HCT116 (cell line): ENCODE measurements at regions of chr12 and their contacts with region 1.

Region 1: DNA sequence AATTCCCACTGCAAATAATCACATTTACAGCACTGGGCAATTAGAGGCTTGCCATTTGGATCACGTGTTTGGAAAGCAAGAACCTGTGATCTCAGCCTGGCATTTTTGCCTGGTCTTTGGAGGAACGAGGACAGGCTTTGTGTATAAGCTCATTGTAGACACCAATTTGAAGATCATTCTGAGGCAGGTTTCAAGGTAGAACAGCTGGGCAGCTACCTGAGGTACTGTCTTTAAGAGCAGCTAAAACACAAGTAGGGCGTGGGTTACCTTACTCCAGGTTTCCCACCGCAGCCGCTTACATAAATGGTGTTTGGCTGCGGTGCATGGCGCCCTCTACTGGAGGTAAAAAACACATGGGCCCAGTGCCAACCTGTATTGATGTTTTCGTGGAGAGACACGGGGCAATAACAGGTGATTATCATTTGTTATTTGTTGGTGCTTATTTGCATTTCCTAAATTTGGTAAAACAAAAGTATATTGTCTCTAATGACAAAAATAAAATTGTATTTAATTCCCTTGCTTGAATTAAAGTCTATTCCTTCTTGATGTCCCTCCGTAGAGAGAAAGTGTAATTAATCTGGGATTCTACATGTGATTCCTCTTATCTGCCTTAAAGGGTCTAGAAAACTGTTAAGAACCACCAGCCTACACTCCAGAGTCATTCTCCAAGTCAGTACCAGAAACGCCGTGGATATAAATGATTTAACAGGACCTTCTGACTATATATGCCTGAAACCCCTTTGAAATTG is 69.7 kb downstream of the SVOP start:
- DNase-seq: peak; percentile 70
- ATAC-seq: peak; percentile 85
- H3K4me3 ChIP-seq: peak overlapping the region; percentile 2 to 27; a peak in 2 of 4 replicates
- H3K27ac ChIP-seq: no peak overlapping the region
- H3K4me1 ChIP-seq: peaks cover 0 to 9% of the 10 kb centered on the region in 2 experiments; a peak in 2 of 4 replicates
- H3K27me3 ChIP-seq: no peaks in the 10 kb centered on the region
- CTCF ChIP-seq: peak; percentile 77 to 95 (median 86)
- POLR2A ChIP-seq: no peak
- RAD21 ChIP-seq: peak; percentile 96

Region 2: DNA sequence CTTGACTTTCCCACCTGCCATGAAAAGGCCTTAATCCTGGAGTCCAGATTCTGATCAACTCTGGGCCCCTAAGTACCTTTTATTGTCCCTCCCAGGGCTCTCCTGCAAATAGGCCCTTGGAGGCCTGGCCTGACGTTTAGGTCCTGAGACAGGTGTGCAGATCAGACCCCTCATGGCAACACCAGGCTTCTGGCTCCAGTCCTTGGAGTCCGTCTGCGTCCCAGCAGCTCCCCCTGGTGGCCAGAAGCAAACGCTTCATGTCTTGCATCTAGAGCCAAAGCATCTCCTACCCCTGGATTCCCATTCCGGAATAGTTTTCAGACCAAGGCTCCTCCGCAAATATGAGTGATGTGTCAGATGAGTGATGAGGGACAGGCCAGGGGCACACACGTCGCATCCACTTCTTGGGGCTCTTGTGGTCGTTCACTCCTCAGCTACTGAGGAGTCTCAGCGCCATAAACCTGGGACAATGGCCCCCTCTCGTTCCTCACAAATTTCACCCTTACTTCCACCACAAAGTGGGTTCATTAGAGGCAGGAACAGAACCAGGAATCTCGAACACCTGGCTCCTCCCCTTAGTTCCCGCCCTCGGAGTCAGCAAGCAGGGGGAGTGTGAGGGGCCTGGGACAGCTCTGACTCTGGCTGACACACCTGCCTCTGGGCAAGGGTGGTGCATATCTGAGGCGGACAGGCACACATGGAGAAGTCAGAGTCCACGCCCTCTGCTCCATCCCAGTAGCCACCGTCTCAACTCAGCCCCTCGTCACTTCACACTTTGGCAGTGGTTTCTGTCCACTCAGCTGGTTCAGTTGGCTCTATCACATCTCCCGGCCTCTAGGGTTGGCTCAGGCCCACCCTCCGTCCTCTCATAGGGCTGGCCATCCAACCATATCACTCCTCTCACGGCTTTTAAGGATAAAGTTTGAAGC is 1343.4 kb before region 1 on chr12:
- CTCF ChIA-PET with region 1: no interaction called
- POLR2A ChIA-PET with region 1: no interaction called
- RAD21 ChIA-PET with region 1: no interaction called
- intact Hi-C with region 1: no loop called
- DNase-seq: peak; percentile 57
- ATAC-seq: peak; percentile 93
- H3K4me3 ChIP-seq: no peak overlapping the region
- H3K27ac ChIP-seq: no peak overlapping the region
- H3K4me1 ChIP-seq: no peaks in the 10 kb centered on the region
- H3K27me3 ChIP-seq: no peaks in the 10 kb centered on the region
- CTCF ChIP-seq: peak; percentile 90 to 93 (median 91)
- POLR2A ChIP-seq: no peak
- RAD21 ChIP-seq: peak; percentile 93

Region 3: DNA sequence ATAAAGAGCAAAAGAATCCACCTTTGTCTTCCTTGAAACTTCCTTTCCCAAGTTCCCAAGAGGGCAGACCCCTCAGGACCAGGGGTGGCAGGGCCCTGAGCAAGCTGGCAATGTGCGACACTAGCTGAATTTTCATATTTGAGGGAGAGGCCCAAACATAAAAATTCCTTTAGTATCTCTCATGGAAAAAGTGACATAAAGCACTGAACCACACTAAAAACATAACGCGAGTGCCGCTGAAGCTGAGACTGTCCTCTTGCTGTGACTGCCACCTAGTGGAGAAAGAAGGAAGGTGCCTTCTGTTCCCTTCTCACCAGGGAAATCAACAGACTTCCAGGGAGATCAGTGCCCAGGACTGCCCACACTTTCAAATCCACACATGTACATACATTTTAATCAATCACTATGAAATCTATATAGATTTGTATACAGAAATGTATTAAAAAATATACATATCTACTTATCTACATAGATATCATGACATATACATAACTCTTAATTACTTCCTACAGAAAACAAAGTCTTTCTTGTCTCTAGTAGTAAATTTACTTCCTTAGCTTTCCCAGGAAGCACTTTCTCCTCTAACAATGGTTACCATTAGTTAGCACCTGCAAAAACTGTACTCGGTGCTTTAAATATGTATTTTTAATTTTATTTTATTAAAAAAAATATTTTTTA is 147.6 kb before region 1 on chr12:
- CTCF ChIA-PET with region 1: interaction called, 9 read pairs
- POLR2A ChIA-PET with region 1: no interaction called
- RAD21 ChIA-PET with region 1: no interaction called
- intact Hi-C with region 1: loop called (anchors 5 kb)
- DNase-seq: peak; percentile 69
- ATAC-seq: peak; percentile 88
- H3K4me3 ChIP-seq: no peak overlapping the region
- H3K27ac ChIP-seq: peak overlapping the region; percentile 12; the same call in 1 of the 2 replicates
- H3K4me1 ChIP-seq: peaks cover 6 to 11% of the 10 kb centered on the region in 2 experiments; a peak in 3 of 4 replicates
- H3K27me3 ChIP-seq: no peaks in the 10 kb centered on the region
- CTCF ChIP-seq: peak; percentile 88 to 91 (median 88)
- POLR2A ChIP-seq: no peak
- RAD21 ChIP-seq: peak; percentile 95

Region 4: DNA sequence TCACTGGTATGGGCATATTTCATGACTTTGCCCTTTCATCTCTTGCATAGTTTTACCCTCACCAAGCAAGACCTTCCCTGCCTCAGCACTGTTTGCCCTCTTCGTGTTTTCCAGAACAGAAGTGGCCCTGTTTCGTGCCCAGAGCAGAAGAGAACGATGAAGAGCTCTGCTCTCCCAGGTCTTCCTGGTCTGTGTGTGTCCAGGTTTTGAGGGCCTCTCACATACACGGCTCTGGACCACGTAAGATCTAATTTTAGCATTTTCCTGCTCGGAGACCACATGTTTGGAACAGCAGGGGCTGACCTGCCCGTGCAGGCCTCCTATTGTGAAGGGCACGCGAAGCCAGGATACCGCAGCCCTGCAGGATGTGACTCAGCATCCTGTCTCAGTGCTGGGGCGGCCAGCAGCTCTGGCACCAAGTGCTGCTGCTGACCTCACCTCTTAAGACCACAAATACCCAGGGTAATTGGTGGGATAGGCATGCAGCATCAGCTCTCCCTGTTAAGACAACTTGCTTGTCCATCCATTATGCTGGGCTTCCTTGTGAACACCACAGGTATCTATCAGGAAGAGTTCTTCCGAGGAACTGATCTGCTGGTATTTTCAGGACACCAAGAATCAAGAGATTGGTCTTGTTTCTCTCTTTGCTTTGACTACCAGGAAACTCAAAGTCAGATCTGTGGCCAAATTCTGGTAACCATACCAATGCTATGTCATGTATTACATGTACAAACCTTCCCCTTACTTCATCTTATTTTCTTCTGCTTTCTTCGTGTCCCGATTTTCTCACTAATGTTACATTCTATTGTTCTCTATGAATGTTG is 112.8 kb before region 1 on chr12:
- CTCF ChIA-PET with region 1: interaction called, 3 read pairs
- POLR2A ChIA-PET with region 1: no interaction called
- RAD21 ChIA-PET with region 1: no interaction called
- intact Hi-C with region 1: loop called (anchors 1 kb)
- DNase-seq: peak; percentile 97
- ATAC-seq: peak; percentile 85
- H3K4me3 ChIP-seq: peak overlapping the region in 1 of 2 experiments; percentile 11; a peak in 2 of 4 replicates
- H3K27ac ChIP-seq: peak overlapping the region; percentile 99
- H3K4me1 ChIP-seq: peaks cover 78 to 95% of the 10 kb centered on the region in 2 experiments
- H3K27me3 ChIP-seq: no peaks in the 10 kb centered on the region
- CTCF ChIP-seq: no peak
- POLR2A ChIP-seq: no peak
- RAD21 ChIP-seq: no peak

Region 5: GRCh38 chr12:108884116-108885012 is 66.8 kb before region 1 on chr12:
- CTCF ChIA-PET with region 1: interaction called, 9 read pairs
- POLR2A ChIA-PET with region 1: no interaction called
- RAD21 ChIA-PET with region 1: interaction called in 1 of 2 experiments, 3 read pairs
- intact Hi-C with region 1: loop called (anchors 2 kb)
- DNase-seq: peak; percentile 39
- ATAC-seq: peak; percentile 87
- H3K4me3 ChIP-seq: no peak overlapping the region
- H3K27ac ChIP-seq: no peak overlapping the region
- H3K4me1 ChIP-seq: peaks cover 0 to 6% of the 10 kb centered on the region in 2 experiments; a peak in 1 of 4 replicates
- H3K27me3 ChIP-seq: no peaks in the 10 kb centered on the region
- CTCF ChIP-seq: peak; percentile 43 to 83 (median 81); a peak in 5 of 6 replicates
- POLR2A ChIP-seq: no peak
- RAD21 ChIP-seq: peak; percentile 49

Region 6: DNA sequence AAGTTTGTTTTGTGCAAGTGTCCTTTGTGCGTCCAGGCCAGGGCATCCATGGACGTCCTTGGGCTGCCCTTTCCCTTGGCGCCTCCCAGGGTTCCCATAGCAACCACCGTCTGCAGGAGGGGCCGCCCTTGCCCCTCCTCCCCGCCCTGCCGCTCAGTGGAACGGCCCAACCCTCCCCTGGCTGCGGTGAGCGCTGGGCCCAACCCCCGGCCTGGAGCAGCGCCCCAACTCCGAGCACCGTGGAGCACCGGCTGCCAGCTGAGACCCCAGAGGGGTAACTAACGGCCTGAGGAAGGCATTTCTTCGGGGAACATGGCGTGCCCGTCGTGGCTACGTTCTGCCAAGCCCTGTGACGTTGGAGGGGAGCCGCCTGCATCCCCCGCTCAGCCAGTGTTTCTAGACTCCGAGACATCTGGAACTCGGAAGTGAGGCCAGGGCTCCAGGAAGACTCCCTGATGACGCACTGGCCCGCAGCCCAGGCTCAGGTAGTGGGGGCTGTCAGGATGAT is 159.9 kb after region 1 on chr12:
- CTCF ChIA-PET with region 1: no interaction called
- POLR2A ChIA-PET with region 1: no interaction called
- RAD21 ChIA-PET with region 1: no interaction called
- intact Hi-C with region 1: no loop called
- DNase-seq: no peak
- ATAC-seq: peak; percentile 15; the same call in 1 of the 2 replicates
- H3K4me3 ChIP-seq: no peak overlapping the region
- H3K27ac ChIP-seq: no peak overlapping the region
- H3K4me1 ChIP-seq: no peaks in the 10 kb centered on the region
- H3K27me3 ChIP-seq: no peaks in the 10 kb centered on the region
- CTCF ChIP-seq: no peak
- POLR2A ChIP-seq: no peak
- RAD21 ChIP-seq: no peak

Region 7: DNA sequence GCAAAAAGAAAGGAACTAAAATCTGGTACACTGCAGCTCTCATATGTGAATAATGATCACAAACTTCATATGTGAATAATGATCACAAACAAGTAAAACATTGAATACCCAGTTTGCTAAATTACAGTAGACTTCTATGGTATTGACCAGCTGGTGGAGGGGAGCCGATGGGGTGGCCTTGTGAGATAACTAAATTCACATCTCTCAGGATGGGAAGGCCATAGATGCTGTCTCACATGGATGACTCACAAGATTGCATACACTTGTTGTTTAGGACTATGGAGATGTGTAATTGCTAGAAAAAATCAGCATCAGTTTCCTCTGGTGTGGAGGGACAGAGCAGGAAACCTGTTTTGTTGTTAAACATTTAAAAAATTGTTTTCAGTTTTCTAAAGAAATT is 214.4 kb after region 1 on chr12:
- CTCF ChIA-PET with region 1: no interaction called
- POLR2A ChIA-PET with region 1: no interaction called
- RAD21 ChIA-PET with region 1: no interaction called
- intact Hi-C with region 1: no loop called
- DNase-seq: no peak
- ATAC-seq: no peak
- H3K4me3 ChIP-seq: no peak overlapping the region
- H3K27ac ChIP-seq: no peak overlapping the region
- H3K4me1 ChIP-seq: no peaks in the 10 kb centered on the region
- H3K27me3 ChIP-seq: no peaks in the 10 kb centered on the region
- CTCF ChIP-seq: no peak
- POLR2A ChIP-seq: no peak
- RAD21 ChIP-seq: no peak

Region 8: GRCh38 chr12:109377139-109377685 is 426.0 kb after region 1 on chr12:
- CTCF ChIA-PET with region 1: no interaction called
- POLR2A ChIA-PET with region 1: no interaction called
- RAD21 ChIA-PET with region 1: no interaction called
- intact Hi-C with region 1: no loop called
- DNase-seq: no peak
- ATAC-seq: no peak
- H3K4me3 ChIP-seq: no peak overlapping the region
- H3K27ac ChIP-seq: no peak overlapping the region
- H3K4me1 ChIP-seq: no peaks in the 10 kb centered on the region
- H3K27me3 ChIP-seq: no peaks in the 10 kb centered on the region
- CTCF ChIP-seq: no peak
- POLR2A ChIP-seq: no peak
- RAD21 ChIP-seq: no peak